Calu3 (cell line): ENCODE measurements at regions of chr11 and their contacts with region 1.

Region 1: DNA sequence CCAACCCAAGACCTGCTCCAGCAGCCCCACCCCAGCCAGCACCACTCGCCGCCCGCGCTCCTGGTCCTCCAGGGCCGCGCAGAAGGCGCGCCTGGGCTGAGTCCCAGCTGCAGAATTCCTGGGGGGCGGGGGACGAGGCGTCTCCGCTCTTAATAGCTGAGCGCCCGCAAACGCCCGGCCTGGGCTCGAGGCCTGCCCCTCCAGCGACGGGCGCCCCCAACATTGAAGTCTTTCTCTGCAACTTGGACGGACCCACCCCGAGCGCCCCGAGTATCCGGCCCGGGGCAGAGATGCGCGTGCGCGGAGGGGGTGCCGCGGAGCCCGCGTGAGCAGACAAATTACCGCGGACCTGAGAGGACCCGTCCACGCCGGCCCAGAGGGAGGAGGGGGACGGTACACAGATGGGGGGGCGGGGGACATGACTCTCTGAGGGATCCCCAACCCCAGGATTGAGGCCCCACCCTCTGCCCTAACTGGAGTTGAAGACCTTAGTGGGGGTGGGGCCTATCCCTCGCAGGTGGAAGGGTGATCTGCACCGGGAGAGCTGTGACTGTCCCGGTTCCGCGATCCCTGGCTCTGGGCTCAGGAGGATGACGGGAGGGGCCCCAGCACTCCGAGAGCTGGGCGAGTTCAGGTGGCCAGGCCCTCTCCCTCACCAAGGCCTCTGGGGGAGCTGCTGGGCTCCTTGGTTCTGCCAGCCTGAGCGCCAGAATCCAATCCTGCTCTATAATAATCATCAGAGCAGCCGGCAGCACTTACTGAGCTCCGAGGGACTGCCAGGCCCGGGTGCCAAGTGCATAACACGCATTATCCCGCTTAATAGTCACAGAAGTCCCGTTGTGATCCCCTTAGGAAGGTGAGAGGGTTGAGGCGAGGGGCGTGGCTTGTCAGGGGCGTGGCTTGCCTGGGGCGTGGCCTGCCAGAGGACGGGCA is 6.9 kb upstream of the SYT7 start:
- DNase-seq: peak; percentile 82
- H3K4me3 Mint-ChIP-seq: peak overlapping the region; percentile 48
- H3K27ac Mint-ChIP-seq: no peak overlapping the region
- H3K4me1 Mint-ChIP-seq: peaks cover 21% of the 10 kb centered on the region
- H3K27me3 Mint-ChIP-seq: peaks cover 57% of the 10 kb centered on the region
- CTCF ChIP-seq: no peak

Region 2: GRCh38 chr11:61102667-61103571 is 484.9 kb before region 1 on chr11:
- CTCF ChIA-PET with region 1: no interaction called
- intact Hi-C with region 1: no loop called
- DNase-seq: no peak
- H3K4me3 Mint-ChIP-seq: no peak overlapping the region
- H3K27ac Mint-ChIP-seq: no peak overlapping the region
- H3K4me1 Mint-ChIP-seq: no peaks in the 10 kb centered on the region
- H3K27me3 Mint-ChIP-seq: peaks cover 27% of the 10 kb centered on the region
- CTCF ChIP-seq: no peak

Region 3: DNA sequence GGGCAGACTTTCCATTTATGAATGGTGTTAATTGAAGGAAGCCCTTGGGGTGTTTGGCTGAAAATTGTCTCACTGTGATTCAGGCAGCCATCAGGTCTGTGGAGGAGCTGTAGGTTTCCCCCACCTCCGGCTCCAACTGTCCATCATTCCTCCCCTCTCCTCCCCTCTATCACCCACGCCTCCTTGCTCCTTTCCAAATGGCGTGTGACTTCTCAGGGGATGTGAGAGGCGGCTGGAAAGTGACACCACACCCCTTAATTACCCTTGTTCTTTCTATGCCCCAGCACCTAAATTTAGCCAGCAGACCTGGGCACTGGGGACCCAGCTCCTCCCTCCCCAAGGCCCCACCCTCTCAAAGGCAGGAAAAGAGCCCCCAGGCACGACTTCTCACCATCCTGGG is 31.2 kb after region 1 on chr11:
- CTCF ChIA-PET with region 1: interaction called, 3 read pairs
- intact Hi-C with region 1: loop called (anchors 2 kb)
- DNase-seq: no peak
- H3K4me3 Mint-ChIP-seq: no peak overlapping the region
- H3K27ac Mint-ChIP-seq: no peak overlapping the region
- H3K4me1 Mint-ChIP-seq: peaks cover 8% of the 10 kb centered on the region
- H3K27me3 Mint-ChIP-seq: peaks cover 7% of the 10 kb centered on the region
- CTCF ChIP-seq: no peak